H1 (cell line): ENCODE measurements at regions of chr19 and their contacts with region 1.

Region 1: GRCh38 chr19:39502640-39503417 is 4.1 kb downstream of the DLL3 start:
- DNase-seq: peak in 1 of 2 experiments; percentile 93
- H3K4me3 ChIP-seq: peak overlapping the region in 1 of 4 experiments; percentile 37; a peak in 1 of 8 replicates
- H3K27ac ChIP-seq: no peak overlapping the region
- H3K4me1 ChIP-seq: peaks cover 3 to 10% (median 5%) of the 10 kb centered on the region in 4 experiments; a peak in 5 of 7 replicates
- H3K27me3 ChIP-seq: peaks cover 36 to 95% (median 85%) of the 10 kb centered on the region in 4 experiments
- CTCF ChIP-seq: peak; percentile 90 to 97 (median 93)
- EP300 ChIP-seq: no peak
- POLR2A ChIP-seq: no peak
- RAD21 ChIP-seq: peak in 1 of 2 experiments; percentile 56; a peak in 2 of 4 replicates

Region 2: GRCh38 chr19:39480337-39481228 is 22.2 kb before region 1 on chr19 and contains the start of gene TIMM50:
- CTCF ChIA-PET with region 1: interaction called, 47 read pairs
- POLR2A ChIA-PET with region 1: interaction called, 96 read pairs
- DNase-seq: peak; percentile 97 to 98
- H3K4me3 ChIP-seq: peak within 1 kb of the TSS; percentile 89 to 98 (median 95)
- H3K27ac ChIP-seq: peak within 1 kb of the TSS; percentile 93
- H3K4me1 ChIP-seq: peaks cover 0 to 10% (median 4%) of the 10 kb centered on the region in 4 experiments; a peak in 5 of 7 replicates
- H3K27me3 ChIP-seq: no peaks in the 10 kb centered on the region
- CTCF ChIP-seq: no peak
- EP300 ChIP-seq: no peak; a peak in 1 of 3 replicates
- POLR2A ChIP-seq: peak; percentile 74 to 84
- RAD21 ChIP-seq: no peak; a peak in 1 of 4 replicates
- total RNA-seq, gene TIMM50: 153 and 155 TPM in 2 replicates

Region 3: DNA sequence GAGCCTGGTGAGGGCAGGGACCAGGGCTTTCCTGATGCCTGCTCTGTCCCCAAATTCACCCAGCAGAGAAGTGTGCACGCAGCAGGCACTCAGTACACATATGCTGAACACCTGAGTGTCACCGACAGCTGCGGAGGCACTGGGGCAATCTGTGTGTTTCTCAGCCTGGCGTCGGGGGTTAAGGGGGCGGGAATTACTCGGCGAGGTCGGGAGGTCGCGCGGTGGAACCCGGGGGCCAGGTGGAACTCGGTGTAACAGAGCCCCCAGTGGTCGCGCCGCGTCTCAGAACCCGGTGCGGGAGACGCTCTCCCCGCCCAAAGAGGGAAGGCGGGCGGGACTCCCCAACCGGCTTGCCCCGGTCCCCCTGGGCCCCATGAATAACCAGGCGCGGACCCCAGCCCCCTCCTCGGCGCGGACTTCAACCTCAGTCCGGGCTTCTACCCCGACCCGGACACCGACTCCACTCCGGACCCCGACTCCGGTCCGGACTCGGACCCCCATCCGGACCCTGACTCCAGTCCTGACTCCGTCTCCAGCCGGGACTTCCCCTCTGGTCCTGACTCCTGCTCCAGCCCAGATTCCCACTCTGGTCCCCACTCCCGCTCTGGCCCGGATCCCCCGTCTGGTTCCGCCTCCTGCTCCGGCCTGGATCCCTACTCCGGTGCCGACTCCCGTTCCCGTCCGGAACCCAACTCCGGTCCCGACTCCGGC is 12.2 kb after region 1 on chr19 and contains the start of gene SELENOV:
- CTCF ChIA-PET with region 1: interaction called, 14 read pairs
- POLR2A ChIA-PET with region 1: interaction called, 13 read pairs
- DNase-seq: peak in 1 of 2 experiments; percentile 91
- H3K4me3 ChIP-seq: peak within 1 kb of the TSS; percentile 76 to 95 (median 90)
- H3K27ac ChIP-seq: peak within 1 kb of the TSS; percentile 61; the same call in 1 of the 2 replicates
- H3K4me1 ChIP-seq: peaks cover 0 to 10% (median 5%) of the 10 kb centered on the region in 4 experiments; a peak in 6 of 7 replicates
- H3K27me3 ChIP-seq: peaks cover 0 to 2% (median 0%) of the 10 kb centered on the region in 4 experiments; a peak in 3 of 7 replicates
- CTCF ChIP-seq: peak; percentile 24 to 41 (median 34)
- EP300 ChIP-seq: peak in 1 of 2 experiments; percentile 66; a peak in 1 of 3 replicates
- POLR2A ChIP-seq: peak in 1 of 2 experiments; percentile 60; a peak in 2 of 3 replicates
- RAD21 ChIP-seq: peak; percentile 26 to 43; a peak in 3 of 4 replicates
- total RNA-seq, gene SELENOV: 8.4 and 11.0 TPM in 2 replicates

Region 4: GRCh38 chr19:39532233-39533002 is 29.6 kb after region 1 on chr19 and contains the start of gene EID2B:
- CTCF ChIA-PET with region 1: interaction called, 20 read pairs
- POLR2A ChIA-PET with region 1: interaction called, 7 read pairs
- DNase-seq: peak; percentile 94 to 96
- H3K4me3 ChIP-seq: peak within 1 kb of the TSS; percentile 55 to 93 (median 78)
- H3K27ac ChIP-seq: no peak within 1 kb of the TSS
- H3K4me1 ChIP-seq: no peaks in the 10 kb centered on the region
- H3K27me3 ChIP-seq: peaks cover 0 to 3% (median 0%) of the 10 kb centered on the region in 4 experiments; a peak in 1 of 7 replicates
- CTCF ChIP-seq: peak; percentile 94 to 99 (median 99)
- EP300 ChIP-seq: no peak
- POLR2A ChIP-seq: peak in 1 of 2 experiments; percentile 51; a peak in 1 of 3 replicates
- RAD21 ChIP-seq: peak; percentile 97 to 99
- total RNA-seq, gene EID2B: 2.4 and 3.4 TPM in 2 replicates

Region 5: DNA sequence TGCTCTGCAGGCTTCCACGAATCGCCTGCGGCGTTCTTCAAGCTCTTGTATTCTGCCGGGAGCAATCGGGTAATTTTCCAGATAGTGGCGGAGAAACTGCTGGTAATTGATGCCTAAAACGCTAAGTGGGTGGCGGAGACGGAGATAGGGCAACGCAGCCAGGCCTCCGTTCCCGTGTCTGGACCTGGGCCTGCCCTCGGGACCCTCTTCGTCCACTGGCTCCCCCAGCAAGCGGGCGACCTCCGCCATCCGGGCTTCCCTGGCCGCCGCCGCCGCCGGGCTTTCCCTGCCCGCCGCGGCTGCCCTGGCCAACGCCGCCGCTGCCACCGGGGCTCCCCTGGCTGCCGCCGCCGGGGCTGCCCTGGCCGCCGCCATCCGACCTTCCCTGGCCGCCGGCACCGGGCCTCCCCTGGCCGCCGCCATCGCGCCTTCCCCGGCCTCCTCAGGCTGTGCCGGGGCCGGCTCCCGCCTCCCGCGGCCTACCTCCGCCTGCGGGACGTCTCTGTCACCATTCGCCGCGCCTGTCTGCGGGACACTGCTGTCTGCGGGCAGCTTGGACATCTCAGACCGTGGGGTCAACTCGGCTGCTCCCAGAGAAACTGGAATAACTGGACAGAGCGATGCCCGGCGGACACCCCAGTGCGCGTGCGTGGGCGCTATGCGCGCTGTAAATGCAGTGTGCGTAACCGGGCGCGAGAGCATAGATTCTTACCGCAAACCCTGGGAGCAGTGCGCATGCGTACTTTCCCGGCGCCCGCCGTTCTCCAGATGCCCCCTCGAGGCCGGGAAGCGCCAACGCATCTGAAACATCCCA is 36.9 kb after region 1 on chr19 and contains the start of gene EID2:
- CTCF ChIA-PET with region 1: interaction called, 20 read pairs
- POLR2A ChIA-PET with region 1: interaction called, 5 read pairs
- DNase-seq: peak in 1 of 2 experiments; percentile 96
- H3K4me3 ChIP-seq: peak within 1 kb of the TSS; percentile 70 to 94 (median 92)
- H3K27ac ChIP-seq: peak within 1 kb of the TSS; percentile 84
- H3K4me1 ChIP-seq: peaks cover 0 to 4% (median under 1%) of the 10 kb centered on the region in 4 experiments; a peak in 3 of 7 replicates
- H3K27me3 ChIP-seq: no peaks in the 10 kb centered on the region
- CTCF ChIP-seq: peak; percentile 66 to 85 (median 74)
- EP300 ChIP-seq: no peak
- POLR2A ChIP-seq: peak in 1 of 2 experiments; percentile 83; a peak in 2 of 3 replicates
- RAD21 ChIP-seq: peak; percentile 46 to 54
- total RNA-seq, gene EID2: 29.6 and 29.9 TPM in 2 replicates

Region 6: DNA sequence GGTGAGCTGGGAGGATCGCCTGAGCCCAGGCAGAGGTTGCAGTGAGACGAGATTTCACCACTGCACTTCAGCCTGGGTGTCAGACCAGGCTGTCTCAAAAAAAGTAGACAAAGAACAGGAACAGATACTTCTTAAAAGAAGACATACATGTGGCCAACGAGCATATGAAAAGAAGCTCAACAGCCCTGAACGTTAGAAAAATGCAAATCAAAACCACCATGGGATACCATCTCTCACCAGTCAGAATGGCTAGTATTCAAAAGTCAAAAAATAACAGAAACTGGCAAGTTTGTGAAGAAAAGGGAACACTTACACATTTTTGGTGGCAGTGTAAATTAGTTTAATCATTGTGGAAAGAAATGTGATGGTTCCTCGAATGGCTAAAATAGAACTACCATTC is 198.5 kb after region 1 on chr19:
- CTCF ChIA-PET with region 1: no interaction called
- POLR2A ChIA-PET with region 1: no interaction called
- DNase-seq: no peak
- H3K4me3 ChIP-seq: no peak overlapping the region
- H3K27ac ChIP-seq: no peak overlapping the region
- H3K4me1 ChIP-seq: no peaks in the 10 kb centered on the region
- H3K27me3 ChIP-seq: no peaks in the 10 kb centered on the region
- CTCF ChIP-seq: no peak
- EP300 ChIP-seq: no peak
- POLR2A ChIP-seq: no peak
- RAD21 ChIP-seq: no peak